A673 (cell line): ENCODE measurements at regions of chr6 and their contacts with region 1.

Region 1: DNA sequence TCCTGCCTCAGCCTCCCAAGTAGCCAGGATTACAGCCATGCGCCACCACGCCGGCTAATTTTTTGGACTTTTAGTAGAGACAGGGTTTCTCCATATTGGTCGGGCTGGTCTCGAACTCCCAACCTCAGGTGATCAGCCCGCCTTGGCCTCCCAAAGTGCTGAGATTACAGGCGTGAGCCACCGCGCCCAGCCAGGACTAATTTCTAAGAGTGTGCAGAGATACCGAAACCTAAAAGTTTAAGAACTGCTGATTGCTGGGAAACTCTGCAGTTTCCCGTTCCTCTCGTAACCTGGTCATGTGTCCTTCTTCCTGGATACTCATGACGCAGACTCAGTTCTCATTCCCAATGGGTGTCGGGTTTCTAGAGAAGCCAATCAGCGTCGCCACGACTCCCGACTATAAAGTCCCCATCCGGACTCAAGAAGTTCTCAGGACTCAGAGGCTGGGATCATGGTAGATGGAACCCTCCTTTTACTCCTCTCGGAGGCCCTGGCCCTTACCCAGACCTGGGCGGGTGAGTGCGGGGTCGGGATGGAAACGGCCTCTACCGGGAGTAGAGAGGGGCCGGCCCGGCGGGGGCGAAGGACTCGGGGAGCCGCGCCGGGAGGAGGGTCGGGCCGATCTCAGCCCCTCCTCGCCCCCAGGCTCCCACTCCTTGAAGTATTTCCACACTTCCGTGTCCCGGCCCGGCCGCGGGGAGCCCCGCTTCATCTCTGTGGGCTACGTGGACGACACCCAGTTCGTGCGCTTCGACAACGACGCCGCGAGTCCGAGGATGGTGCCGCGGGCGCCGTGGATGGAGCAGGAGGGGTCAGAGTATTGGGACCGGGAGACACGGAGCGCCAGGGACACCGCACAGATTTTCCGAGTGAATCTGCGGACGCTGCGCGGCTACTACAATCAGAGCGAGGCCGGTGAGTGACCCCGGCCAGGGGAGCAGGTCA is at the start of gene HLA-E:
- DNase-seq: peak; percentile 99
- H3K4me3 ChIP-seq: peak within 1 kb of the TSS; percentile 83
- H3K27ac ChIP-seq: peak within 1 kb of the TSS; percentile 81
- H3K4me1 ChIP-seq: peaks cover 8% of the 10 kb centered on the region
- H3K27me3 ChIP-seq: no peaks in the 10 kb centered on the region
- CTCF ChIP-seq: no peak
- total RNA-seq, gene HLA-E: 36.9 and 41.1 TPM in 2 replicates

Region 2: GRCh38 chr6:30672445-30673253 is 183.3 kb after region 1 on chr6 and contains the start of gene DHX16:
- CTCF ChIA-PET with region 1: no interaction called
- POLR2A ChIA-PET with region 1: no interaction called
- intact Hi-C with region 1: loop called (anchors 10 kb)
- DNase-seq: peak; percentile 98
- H3K4me3 ChIP-seq: peak within 1 kb of the TSS; percentile 87
- H3K27ac ChIP-seq: peak within 1 kb of the TSS; percentile 61
- H3K4me1 ChIP-seq: peaks cover 7% of the 10 kb centered on the region
- H3K27me3 ChIP-seq: no peaks in the 10 kb centered on the region
- CTCF ChIP-seq: peak; percentile 96
- total RNA-seq, gene DHX16: 44.7 and 46.4 TPM in 2 replicates